ENCODE measurements at regions of chr15 and their contacts with region 1.

Region 1: GRCh38 chr15:73598530-73599160 is 34.5 kb downstream of the NPTN start:
- DNase-seq: no peak
- ATAC-seq: no peak
- H3K4me3 Mint-ChIP-seq: no peak overlapping the region
- H3K27ac Mint-ChIP-seq: no peak overlapping the region
- H3K4me1 Mint-ChIP-seq: peaks cover 32% of the 10 kb centered on the region
- H3K27me3 Mint-ChIP-seq: no peaks in the 10 kb centered on the region

Region 2: GRCh38 chr15:73608941-73609340 is 10.3 kb after region 1 on chr15:
- CTCF ChIA-PET with region 1: interaction called, 10 read pairs
- POLR2A ChIA-PET with region 1: interaction called, 4 read pairs
- intact Hi-C with region 1: no loop called
- DNase-seq: no peak
- ATAC-seq: peak; percentile 49
- H3K4me3 Mint-ChIP-seq: no peak overlapping the region
- H3K27ac Mint-ChIP-seq: no peak overlapping the region
- H3K4me1 Mint-ChIP-seq: peaks cover 54% of the 10 kb centered on the region
- H3K27me3 Mint-ChIP-seq: no peaks in the 10 kb centered on the region

Region 3: DNA sequence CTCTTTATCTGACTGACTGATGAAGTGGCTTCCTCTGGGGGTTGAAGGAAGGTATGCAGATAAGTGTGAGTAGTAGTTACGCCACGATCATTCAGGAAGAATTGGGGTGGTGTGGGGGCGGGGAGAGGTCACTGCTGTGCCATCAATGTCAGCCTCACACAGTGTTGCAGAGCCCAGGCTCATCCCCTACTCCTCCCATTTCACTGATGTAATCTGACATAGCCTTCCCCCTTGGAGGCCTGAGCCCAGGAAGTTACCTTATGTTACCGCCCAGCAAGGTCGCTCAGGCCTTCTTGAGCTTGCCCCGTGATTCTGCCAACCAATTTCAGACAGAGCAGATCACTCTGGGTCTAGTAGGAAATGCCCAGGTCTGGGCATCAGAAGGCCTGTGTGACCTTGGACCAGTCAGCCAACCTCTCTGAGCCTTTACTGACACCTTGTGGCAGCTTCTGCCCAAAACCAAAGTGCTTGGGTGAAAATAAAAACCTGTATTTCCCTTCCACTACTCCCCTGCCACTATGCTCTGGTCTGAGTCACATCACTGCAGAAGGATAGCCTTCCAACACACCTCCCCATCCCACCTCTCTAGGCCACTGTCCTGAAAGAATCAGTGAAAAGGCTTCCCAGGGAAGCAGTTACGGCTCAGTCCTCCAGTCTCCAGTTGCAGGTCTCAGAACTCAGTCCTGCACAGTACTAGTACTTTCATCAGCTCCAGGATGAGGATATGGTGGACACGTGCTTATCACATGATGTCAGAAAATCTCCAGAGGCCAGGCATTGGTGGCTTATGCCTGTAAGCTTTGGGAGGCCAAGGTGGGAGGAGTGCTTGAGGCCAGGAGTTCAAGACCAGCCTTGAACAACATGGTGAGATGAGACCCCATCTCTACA is 182.6 kb after region 1 on chr15:
- CTCF ChIA-PET with region 1: no interaction called
- POLR2A ChIA-PET with region 1: no interaction called
- intact Hi-C with region 1: no loop called
- DNase-seq: peak; percentile 37
- ATAC-seq: peak; percentile 30
- H3K4me3 Mint-ChIP-seq: no peak overlapping the region
- H3K27ac Mint-ChIP-seq: no peak overlapping the region
- H3K4me1 Mint-ChIP-seq: no peaks in the 10 kb centered on the region
- H3K27me3 Mint-ChIP-seq: no peaks in the 10 kb centered on the region